ENCODE measurements at regions of chr20 and their contacts with region 1.

Region 1: DNA sequence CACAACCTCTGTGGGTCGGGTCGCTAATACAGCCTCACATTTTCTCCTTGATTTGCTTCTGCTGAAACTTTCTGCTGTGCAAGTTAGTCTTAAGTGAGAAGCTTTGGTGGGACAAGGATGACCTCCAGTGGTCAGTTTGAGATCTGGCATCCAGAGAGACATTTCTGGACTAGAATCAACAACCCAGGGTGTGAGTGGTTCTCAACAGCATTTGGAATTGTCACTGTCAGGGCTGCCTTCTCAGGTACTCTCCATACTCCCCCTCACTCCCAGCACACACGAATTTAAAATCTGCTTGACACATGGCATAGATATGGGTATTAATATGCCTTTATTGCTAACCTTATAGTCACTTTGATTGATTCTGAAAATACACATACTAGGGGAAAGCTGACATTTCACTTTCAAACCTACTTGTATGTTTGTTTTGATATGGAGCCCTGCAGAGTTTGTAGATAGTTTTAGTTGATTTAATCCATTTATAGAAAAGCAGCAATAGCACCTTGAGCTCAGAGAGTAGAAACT is 13.2 kb downstream of the OTOR start:
- DNase-seq: peak; percentile 65
- H3K4me3 Mint-ChIP-seq: no peak overlapping the region
- H3K27ac Mint-ChIP-seq: no peak overlapping the region
- H3K4me1 Mint-ChIP-seq: no peaks in the 10 kb centered on the region
- H3K27me3 Mint-ChIP-seq: peaks cover 3% of the 10 kb centered on the region

Region 2: DNA sequence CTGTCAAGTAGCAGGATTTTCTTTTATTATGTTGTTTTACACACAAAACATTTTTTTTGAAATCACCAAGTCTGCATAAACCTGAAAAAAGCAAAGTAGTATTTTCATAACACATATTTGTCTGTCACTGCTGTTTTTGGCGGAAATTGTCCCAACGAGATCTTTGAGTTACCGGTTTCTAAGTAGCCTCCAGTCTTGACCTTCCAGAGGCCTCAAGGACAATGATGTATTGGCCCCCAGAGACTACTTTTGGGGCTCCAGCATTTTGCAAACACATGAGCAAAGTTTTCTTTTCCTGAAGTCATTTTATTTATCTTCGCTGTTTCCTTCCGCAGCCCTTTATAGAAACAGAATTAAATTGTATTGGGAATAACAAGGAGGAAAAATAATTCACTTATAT is 1050.7 kb before region 1 on chr20:
- CTCF ChIA-PET with region 1: no interaction called
- intact Hi-C with region 1: loop called (anchors 5 kb)
- DNase-seq: no peak
- H3K4me3 Mint-ChIP-seq: no peak overlapping the region
- H3K27ac Mint-ChIP-seq: no peak overlapping the region
- H3K4me1 Mint-ChIP-seq: no peaks in the 10 kb centered on the region
- H3K27me3 Mint-ChIP-seq: peaks cover 3% of the 10 kb centered on the region

Region 3: GRCh38 chr20:16517946-16518783 is 243.2 kb before region 1 on chr20:
- CTCF ChIA-PET with region 1: interaction called, 3 read pairs
- intact Hi-C with region 1: loop called (anchors 1 kb)
- DNase-seq: peak; percentile 55
- H3K4me3 Mint-ChIP-seq: no peak overlapping the region
- H3K27ac Mint-ChIP-seq: no peak overlapping the region
- H3K4me1 Mint-ChIP-seq: peaks cover 5% of the 10 kb centered on the region
- H3K27me3 Mint-ChIP-seq: no peaks in the 10 kb centered on the region

Region 4: GRCh38 chr20:16701296-16701695 is 60.1 kb before region 1 on chr20:
- CTCF ChIA-PET with region 1: interaction called, 3 read pairs
- intact Hi-C with region 1: loop called (anchors 1 kb)
- DNase-seq: peak; percentile 31
- H3K4me3 Mint-ChIP-seq: no peak overlapping the region
- H3K27ac Mint-ChIP-seq: no peak overlapping the region
- H3K4me1 Mint-ChIP-seq: no peaks in the 10 kb centered on the region
- H3K27me3 Mint-ChIP-seq: peaks cover 5% of the 10 kb centered on the region

Measured in activated naive CD4-positive, alpha-beta T cell treated with anti-CD3 and anti-CD28 coated beads for 36 hours (primary cell).